Posterior cingulate gyrus (tissue), 11 donors: ENCODE measurements at regions of chr10 and their contacts with region 1.

Region 1: GRCh38 chr10:69237528-69238159 is 17.5 kb downstream of the HKDC1 start:
- DNase-seq: peak; percentile 79 to 99 (median 94)

Region 2: GRCh38 chr10:68981074-68981473 is 256.6 kb before region 1 on chr10:
- intact Hi-C with region 1: no loop called
- DNase-seq: no peak

Region 3: DNA sequence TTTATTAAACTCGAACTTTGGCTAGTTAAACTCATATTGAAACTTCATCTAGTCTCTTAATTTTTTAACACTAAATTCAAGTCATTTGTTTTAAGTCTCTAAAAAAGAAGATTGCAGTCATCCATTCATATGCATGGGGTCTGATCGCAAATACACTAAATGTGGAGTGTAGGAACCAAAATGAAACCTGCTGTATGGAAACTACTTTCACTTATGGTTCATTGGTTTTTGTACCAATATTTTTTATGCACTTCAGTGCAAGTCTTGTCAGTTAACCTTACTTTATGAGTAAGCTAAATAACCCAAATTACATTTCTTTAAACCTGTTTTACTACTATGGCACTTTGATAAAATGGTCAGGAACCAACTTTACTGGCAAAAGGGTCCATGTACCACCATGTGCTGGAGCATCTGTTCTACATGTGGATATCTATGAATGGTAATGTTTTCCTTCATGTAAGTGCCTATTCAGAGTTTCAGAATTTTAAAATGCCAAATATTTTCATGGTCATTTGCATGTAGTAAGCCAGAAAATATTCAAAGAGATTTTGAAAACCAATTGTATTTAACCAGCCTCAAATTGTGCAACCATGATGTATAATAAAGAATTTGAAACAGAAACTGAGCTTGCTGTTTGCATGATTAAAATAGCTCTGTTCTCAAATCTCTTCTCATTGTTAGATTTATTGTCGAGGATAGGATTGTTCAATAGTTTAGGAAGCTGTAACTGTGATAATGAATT is 65.2 kb before region 1 on chr10:
- intact Hi-C with region 1: no loop called
- DNase-seq: no peak

Region 4: DNA sequence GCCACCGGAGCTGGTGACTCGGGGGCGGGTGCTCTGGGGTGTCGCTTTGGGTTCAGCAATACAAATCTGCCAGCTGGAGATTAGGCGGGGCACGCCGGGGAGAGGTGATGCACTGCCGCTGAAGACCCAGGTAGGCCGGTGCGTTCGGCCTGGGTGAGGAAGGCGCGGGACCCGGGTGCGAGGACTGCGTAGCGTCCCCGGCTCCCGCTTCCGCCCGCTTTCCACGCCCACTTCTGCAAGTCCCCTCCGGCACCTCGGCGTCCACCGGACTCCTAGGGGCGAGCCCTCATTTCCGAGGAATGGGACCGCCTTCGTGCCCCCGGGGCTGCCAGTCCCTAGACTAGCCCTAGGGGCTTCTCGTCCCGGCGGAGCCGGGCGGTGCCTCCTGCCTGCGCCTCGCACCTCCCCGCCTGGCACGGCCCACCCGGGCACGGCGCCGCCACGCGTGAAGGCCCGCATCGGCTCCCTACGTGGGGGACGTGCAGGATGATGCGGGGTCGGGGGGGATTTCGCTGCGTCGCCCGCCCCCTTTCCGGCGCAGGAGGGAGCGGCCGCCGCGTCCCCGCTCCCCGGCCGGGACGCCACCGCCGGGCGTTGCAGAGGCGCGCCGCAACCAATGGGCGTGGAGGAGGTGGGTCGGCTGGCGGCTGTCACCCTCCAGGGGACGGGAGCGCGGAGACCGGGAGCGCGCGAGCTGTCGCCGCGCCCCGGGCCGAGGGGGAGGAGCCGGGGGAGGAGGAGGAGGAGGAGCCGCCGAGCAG is 80.6 kb after region 1 on chr10:
- intact Hi-C with region 1: loop called (anchors 5 kb)
- DNase-seq: peak; percentile 70 to 98 (median 86)

Region 5: DNA sequence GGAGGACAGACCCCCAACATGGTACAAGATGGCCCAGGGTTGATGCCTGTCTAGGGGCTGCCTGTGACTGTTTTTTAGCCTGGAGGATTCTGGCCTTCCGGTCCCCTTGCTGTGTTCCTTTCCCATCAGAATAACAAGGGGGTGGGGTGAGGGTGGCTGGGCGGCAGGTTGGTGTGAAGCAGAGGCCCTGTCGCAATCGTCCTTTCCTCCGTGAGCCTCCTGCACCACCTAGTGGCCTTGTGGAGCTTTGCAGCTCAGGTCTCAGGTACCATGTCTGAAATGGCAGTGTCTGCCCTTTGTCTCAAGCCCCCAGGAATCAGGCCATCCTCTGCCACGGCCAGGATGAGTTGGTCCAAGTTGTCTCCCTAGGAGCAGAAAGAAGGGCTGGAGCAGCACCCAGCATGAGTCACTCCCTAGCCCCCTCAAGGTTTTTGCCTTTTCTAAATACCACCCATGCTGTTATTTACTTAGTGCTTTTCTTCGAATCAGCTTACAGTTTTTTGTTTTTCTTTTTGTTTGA is 154.9 kb after region 1 on chr10:
- intact Hi-C with region 1: loop called (anchors 1 kb)
- DNase-seq: peak; percentile 53 to 97 (median 82)

Region 6: GRCh38 chr10:69801434-69802315 is 564.0 kb after region 1 on chr10 and contains the start of gene COL13A1:
- intact Hi-C with region 1: no loop called
- DNase-seq: peak in 1 of 10 donors; percentile 17

Region 7: DNA sequence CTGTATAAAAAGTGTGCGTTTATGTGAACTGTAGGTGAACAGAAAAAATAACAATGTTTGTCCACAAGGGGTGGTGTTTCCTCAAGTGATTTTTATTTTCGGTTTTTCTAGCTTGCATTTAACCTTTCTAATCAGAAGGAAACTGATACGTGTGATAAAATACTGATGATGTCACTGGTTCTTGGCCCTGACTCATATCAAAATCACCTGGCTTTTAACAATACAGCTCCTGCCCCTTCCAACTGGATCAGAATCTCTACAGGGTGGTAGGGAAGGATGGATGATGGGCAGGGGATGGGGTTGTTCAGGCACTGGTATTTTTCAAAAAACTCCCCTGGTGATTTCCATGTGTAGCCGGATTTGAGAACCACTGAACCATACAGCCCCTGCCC is 1035.3 kb after region 1 on chr10:
- intact Hi-C with region 1: no loop called
- DNase-seq: no peak